ENCODE measurements at regions of chr11 and their contacts with region 1.

Region 1: GRCh38 chr11:69642913-69643632 is 2.1 kb downstream of the CCND1 start:
- DNase-seq: peak; percentile 78
- H3K4me3 Mint-ChIP-seq: peak overlapping the region; percentile 98
- H3K27ac Mint-ChIP-seq: no peak overlapping the region
- H3K4me1 Mint-ChIP-seq: peaks cover 8% of the 10 kb centered on the region
- H3K27me3 Mint-ChIP-seq: no peaks in the 10 kb centered on the region
- CTCF ChIP-seq: peak; percentile 97

Region 2: DNA sequence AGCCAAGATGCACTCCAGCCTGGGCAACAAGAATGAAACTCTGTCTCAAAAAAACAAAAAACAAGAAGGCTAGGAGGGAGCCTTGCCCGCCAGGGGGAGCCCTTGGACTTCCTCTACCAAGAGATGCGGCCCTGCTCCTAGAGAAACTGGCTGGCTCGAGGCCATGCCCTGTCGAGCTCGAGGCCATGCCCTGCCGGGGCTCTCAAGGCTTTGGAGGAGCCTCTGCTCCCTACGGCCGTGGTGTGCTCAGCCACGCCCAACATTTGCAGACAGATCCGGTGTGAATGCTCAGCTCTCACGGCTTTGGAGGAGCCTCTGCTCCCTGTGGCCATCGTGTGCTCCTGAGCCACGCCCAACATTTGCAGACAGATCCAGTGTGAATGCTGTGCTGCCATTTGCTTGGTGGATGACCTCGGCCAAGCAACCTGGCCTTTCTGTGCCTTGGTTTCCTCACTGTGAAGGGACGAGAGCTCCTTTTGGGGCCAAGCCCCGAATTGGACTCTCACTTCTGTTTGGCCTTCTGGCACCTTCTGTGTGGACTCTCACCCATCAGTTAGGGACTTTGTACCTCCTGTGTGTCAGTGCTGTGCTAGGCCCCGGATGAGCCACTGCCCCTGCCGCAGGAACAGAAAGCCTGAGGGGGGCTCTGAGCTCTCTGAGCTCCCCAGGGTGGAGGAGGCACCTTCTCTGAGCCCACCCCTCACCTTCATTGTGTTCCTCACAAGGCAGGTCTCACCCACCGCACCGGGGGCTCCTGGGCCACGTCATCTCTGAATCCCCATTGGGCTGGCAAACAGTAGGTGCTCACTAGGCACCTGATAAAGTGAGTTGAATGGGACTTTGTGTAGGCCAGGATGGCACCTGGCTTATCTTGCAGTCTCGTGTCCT is 1385.4 kb before region 1 on chr11:
- CTCF ChIA-PET with region 1: no interaction called
- POLR2A ChIA-PET with region 1: no interaction called
- intact Hi-C with region 1: loop called (anchors 5 kb)
- DNase-seq: peak; percentile 93
- H3K4me3 Mint-ChIP-seq: no peak overlapping the region
- H3K27ac Mint-ChIP-seq: no peak overlapping the region
- H3K4me1 Mint-ChIP-seq: no peaks in the 10 kb centered on the region
- H3K27me3 Mint-ChIP-seq: no peaks in the 10 kb centered on the region
- CTCF ChIP-seq: peak; percentile 88

Region 3: DNA sequence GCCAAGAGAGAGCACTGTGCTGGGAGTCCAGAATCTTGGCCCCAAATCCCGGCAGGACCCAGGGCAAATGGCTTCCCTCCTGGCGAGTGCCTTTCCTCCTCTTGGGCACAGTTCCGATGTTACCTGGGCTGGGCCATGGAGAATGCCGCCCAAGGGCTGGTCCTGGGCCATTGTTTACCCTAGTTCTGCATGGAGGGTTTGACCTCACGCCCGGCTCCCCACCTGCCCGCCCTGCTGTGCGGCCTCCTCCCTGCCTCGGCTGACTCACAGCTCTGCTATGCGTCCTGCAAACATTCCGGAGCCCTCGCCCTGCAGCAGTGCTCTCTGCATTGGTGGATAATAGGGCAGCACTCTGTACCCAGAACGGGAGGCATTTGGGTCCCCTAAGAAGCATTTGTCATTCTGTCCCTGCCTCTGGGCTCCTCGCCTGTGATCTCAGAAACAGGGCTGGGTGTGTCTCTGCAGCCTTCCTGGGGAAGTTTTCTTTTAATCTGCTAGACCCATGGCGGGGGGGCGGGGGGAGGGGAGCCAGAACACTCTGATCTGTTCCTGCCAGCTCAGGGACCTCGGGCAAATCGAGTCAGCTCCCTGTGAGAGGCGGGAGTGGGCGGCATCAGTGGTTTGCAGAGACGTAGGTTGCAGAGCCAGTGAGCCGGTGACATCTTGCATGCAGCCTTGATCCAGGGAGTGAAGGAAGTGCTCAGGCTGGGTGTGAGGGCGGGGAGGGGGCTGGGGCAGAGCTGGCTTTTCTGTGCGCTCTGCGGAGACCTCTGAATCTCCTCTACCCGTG is 520.2 kb before region 1 on chr11:
- CTCF ChIA-PET with region 1: interaction called, 5 read pairs
- POLR2A ChIA-PET with region 1: interaction called, 27 read pairs
- intact Hi-C with region 1: loop called (anchors 1 kb)
- DNase-seq: peak; percentile 92
- H3K4me3 Mint-ChIP-seq: peak overlapping the region; percentile 47
- H3K27ac Mint-ChIP-seq: peak overlapping the region; percentile 71
- H3K4me1 Mint-ChIP-seq: peaks cover 31% of the 10 kb centered on the region
- H3K27me3 Mint-ChIP-seq: no peaks in the 10 kb centered on the region
- CTCF ChIP-seq: no peak

Region 4: DNA sequence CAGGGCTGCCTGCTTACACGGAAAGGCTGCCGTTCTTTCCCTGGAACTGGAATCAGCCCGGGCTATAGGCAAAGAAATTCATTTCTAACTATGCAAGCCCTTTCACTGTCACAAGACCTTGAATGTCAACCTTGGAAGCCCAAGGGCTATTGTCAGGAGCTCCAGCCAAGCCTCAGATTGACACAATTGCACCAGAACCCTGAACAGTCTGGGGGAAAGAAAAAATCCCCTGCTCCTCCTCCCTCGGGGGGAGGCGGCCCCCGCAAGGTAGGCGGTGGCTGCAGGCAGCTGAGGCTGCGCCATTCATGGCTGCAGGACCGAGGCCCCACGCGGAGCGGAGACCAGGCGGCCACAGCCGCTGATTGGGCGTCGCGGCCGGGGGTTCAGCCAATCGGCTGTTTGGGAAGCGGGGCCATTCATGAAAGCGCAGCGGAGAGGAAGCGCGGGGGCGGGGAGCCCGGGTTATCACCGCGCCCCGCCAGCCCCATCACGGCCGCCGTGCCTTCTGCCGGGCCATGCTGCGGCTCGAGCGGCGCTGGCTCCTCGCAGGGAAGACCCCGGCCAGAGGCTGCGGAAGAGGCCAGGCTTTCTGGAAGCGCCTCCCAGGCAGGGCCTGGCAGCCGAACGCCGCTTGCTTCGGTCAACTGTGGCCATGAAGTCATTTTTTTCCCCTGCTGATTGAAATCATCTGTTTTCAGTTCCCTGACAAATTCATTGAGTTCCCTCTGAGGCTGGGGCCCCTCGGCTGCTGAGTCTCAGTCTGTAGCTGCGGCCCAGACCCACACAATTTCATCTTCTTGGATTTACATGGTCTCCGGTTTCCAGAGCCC is 199.7 kb before region 1 on chr11:
- CTCF ChIA-PET with region 1: no interaction called
- POLR2A ChIA-PET with region 1: no interaction called
- intact Hi-C with region 1: loop called (anchors 2 kb)
- DNase-seq: peak; percentile 80
- H3K4me3 Mint-ChIP-seq: no peak overlapping the region
- H3K27ac Mint-ChIP-seq: no peak overlapping the region
- H3K4me1 Mint-ChIP-seq: peaks cover 21% of the 10 kb centered on the region
- H3K27me3 Mint-ChIP-seq: no peaks in the 10 kb centered on the region
- CTCF ChIP-seq: no peak

Region 5: DNA sequence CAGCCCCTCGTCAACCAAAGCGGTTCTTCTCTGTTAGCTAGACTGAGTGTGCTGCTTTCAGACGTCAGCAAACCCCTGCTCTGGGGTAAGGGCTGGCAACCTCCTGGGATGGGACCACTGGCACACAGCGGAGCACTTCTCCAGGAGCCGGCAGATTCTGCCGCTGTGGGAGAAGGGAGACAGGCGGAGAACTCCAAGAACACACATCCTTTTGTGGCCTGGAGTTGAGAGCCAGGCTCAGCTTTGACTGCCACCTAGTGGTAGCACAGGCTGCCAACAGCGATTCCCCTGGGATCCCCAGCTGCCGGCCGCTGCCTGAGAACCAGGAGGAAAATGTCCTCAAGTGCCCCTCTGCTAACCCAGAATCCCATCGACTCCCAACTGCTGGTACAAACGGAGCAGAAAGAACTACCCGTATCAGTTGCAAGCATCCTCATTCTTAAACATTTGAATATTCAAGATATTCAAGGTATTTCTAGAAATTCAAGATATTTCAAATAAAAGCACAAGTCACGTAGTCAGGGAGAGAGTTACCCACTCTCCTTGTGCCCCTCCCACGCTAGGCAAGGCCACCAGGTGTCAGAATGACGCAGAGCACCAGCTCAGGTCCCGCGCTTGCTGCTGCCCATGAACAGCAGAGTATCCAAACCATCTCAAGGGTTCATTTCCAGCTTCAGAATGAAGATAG is 27.2 kb after region 1 on chr11:
- CTCF ChIA-PET with region 1: interaction called, 23 read pairs
- POLR2A ChIA-PET with region 1: interaction called, 15 read pairs
- intact Hi-C with region 1: loop called (anchors 2 kb)
- DNase-seq: peak; percentile 77
- H3K4me3 Mint-ChIP-seq: no peak overlapping the region
- H3K27ac Mint-ChIP-seq: no peak overlapping the region
- H3K4me1 Mint-ChIP-seq: peaks cover 4% of the 10 kb centered on the region
- H3K27me3 Mint-ChIP-seq: no peaks in the 10 kb centered on the region
- CTCF ChIP-seq: peak; percentile 94

Region 6: DNA sequence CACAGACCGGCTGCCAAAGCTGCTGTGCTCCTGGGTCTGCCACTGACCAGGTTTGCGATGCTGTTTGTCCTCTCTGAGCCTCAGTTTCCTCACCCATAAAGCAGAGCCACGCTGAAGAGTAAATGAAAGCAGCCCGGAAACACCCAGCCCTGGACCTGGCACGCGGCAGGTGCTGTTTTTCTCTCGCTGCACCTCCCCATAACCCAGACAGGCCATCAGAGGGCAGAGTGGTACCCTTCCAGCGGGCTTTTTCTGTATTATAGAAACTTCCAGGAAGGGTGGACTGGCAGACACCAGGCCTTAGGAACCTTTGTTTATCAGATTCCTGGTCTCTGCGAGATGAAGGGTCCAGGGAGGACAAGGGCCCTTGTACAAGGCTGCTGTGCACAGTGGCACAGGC is 78.7 kb after region 1 on chr11:
- CTCF ChIA-PET with region 1: no interaction called
- POLR2A ChIA-PET with region 1: no interaction called
- intact Hi-C with region 1: no loop called
- DNase-seq: peak; percentile 19
- H3K4me3 Mint-ChIP-seq: no peak overlapping the region
- H3K27ac Mint-ChIP-seq: no peak overlapping the region
- H3K4me1 Mint-ChIP-seq: no peaks in the 10 kb centered on the region
- H3K27me3 Mint-ChIP-seq: peaks cover 64% of the 10 kb centered on the region
- CTCF ChIP-seq: peak; percentile 31

Region 7: DNA sequence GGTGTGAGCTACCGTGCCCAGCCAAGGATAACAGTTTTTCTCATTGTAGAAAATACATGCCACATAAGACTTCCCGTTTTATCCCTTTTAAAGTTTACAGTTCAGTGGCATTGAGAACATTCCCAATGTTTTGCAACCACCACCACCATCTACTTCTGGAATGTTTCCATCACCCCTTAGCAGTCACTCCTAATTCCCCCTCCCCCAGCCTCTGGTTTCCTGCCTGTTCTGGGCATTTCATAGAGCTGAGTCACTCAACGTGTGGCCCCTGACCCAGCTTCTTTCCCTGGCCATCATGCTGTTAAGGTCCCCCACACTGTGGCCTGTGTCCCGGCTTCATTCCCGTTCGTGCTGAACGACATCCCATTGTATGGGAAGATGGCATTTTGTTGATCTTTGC is 101.4 kb after region 1 on chr11:
- CTCF ChIA-PET with region 1: no interaction called
- POLR2A ChIA-PET with region 1: no interaction called
- intact Hi-C with region 1: no loop called
- DNase-seq: peak; percentile 60
- H3K4me3 Mint-ChIP-seq: no peak overlapping the region
- H3K27ac Mint-ChIP-seq: no peak overlapping the region
- H3K4me1 Mint-ChIP-seq: peaks cover 6% of the 10 kb centered on the region
- H3K27me3 Mint-ChIP-seq: peaks cover 32% of the 10 kb centered on the region
- CTCF ChIP-seq: no peak

Measured in MCF 10A (cell line).